Ovary (tissue), 10 donors: ENCODE measurements at regions of chr13 and their contacts with region 1.

Region 1: GRCh38 chr13:94157705-94158218 is 321.7 kb downstream of the DCT start:
- DNase-seq: peak in 3 of 5 donors; percentile 15 to 48 (median 34)
- H3K4me3 ChIP-seq: no peak overlapping the region
- H3K27ac ChIP-seq: no peak overlapping the region
- H3K4me1 ChIP-seq: peaks cover 3% of the 10 kb centered on the region
- H3K27me3 ChIP-seq: no peaks in the 10 kb centered on the region
- CTCF ChIP-seq: no peak
- EP300 ChIP-seq: peak; percentile 30
- POLR2A ChIP-seq: no peak

Region 2: DNA sequence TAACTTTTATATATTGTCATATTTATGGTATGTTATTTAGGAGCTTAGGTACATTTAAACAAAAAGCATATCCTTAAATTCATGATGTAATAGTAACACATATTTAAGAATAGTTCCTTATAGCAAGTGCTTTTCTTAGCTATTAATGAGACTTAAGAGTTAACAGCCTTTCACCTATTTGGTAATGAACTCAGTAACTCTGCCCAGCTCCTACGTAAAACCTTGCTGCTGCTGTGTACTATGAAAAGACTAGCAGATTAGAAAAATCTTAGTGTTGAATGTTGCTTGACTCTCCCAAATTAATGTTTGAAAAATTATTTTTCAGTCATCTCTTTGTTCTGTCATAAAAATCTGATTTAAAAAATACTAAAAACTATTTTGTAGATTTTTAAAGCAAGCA is 450.8 kb after region 1 on chr13:
- intact Hi-C with region 1: no loop called
- DNase-seq: no peak
- H3K4me3 ChIP-seq: no peak overlapping the region
- H3K27ac ChIP-seq: no peak overlapping the region
- H3K4me1 ChIP-seq: no peaks in the 10 kb centered on the region
- H3K27me3 ChIP-seq: no peaks in the 10 kb centered on the region
- CTCF ChIP-seq: no peak
- EP300 ChIP-seq: no peak
- POLR2A ChIP-seq: no peak

Region 3: GRCh38 chr13:95987841-95988240 is 1830.1 kb after region 1 on chr13:
- intact Hi-C with region 1: loop called in 1 of 4 experiments (anchors 5 kb)
- DNase-seq: no peak
- H3K4me3 ChIP-seq: no peak overlapping the region
- H3K27ac ChIP-seq: no peak overlapping the region
- H3K4me1 ChIP-seq: no peaks in the 10 kb centered on the region
- H3K27me3 ChIP-seq: no peaks in the 10 kb centered on the region
- CTCF ChIP-seq: no peak
- EP300 ChIP-seq: no peak
- POLR2A ChIP-seq: no peak